A549 (cell line): ENCODE measurements at regions of chr16 and their contacts with region 1.

Region 1: GRCh38 chr16:67159593-67160406 is at the starts of genes FBXL8 and TRADD:
- DNase-seq: peak; percentile 67 to 76
- ATAC-seq: peak; percentile 83 to 89
- H3K4me3 ChIP-seq: peak within 1 kb of the TSS; percentile 94
- H3K27ac ChIP-seq: peak within 1 kb of the TSS; percentile 86 to 90
- H3K4me1 ChIP-seq: peaks cover 21% of the 10 kb centered on the region
- CTCF ChIP-seq: peak; percentile 70
- EP300 ChIP-seq: no peak
- POLR2A ChIP-seq: peak; percentile 64
- RAD21 ChIP-seq: no peak; a peak in 1 of 5 replicates
- polyA plus RNA-seq, gene FBXL8: 5.4 and 5.6 TPM in 2 replicates
- polyA plus RNA-seq, gene TRADD: 7.8 and 9.1 TPM in 2 replicates

Region 2: GRCh38 chr16:66961065-66961744 is 198.6 kb before region 1 on chr16 and contains the start of gene CES3:
- CTCF ChIA-PET with region 1: interaction called, 24 read pairs
- POLR2A ChIA-PET with region 1: interaction called, 4 read pairs
- DNase-seq: peak; percentile 80 to 85
- ATAC-seq: peak; percentile 99 to 100
- H3K4me3 ChIP-seq: peak within 1 kb of the TSS; percentile 33
- H3K27ac ChIP-seq: peak within 1 kb of the TSS; percentile 49 to 82; a peak in 4 of 6 replicates
- H3K4me1 ChIP-seq: no peaks in the 10 kb centered on the region
- CTCF ChIP-seq: peak; percentile 85
- EP300 ChIP-seq: no peak
- POLR2A ChIP-seq: no peak
- RAD21 ChIP-seq: peak in 1 of 2 experiments; percentile 18; a peak in 1 of 5 replicates
- polyA plus RNA-seq, gene CES3: 3.8 and 4.1 TPM in 2 replicates

Region 3: GRCh38 chr16:66988197-66988788 is 171.5 kb before region 1 on chr16 and contains the start of gene CES4A:
- CTCF ChIA-PET with region 1: interaction called, 11 read pairs
- POLR2A ChIA-PET with region 1: no interaction called
- DNase-seq: no peak
- ATAC-seq: peak; percentile 57 to 60; a peak in 5 of 6 replicates
- H3K4me3 ChIP-seq: no peak within 1 kb of the TSS
- H3K27ac ChIP-seq: peak within 1 kb of the TSS; percentile 38 to 44; a peak in 2 of 6 replicates
- H3K4me1 ChIP-seq: peaks cover 4% of the 10 kb centered on the region; the same call in 1 of the 3 replicates
- CTCF ChIP-seq: no peak
- EP300 ChIP-seq: no peak
- POLR2A ChIP-seq: no peak
- RAD21 ChIP-seq: no peak
- polyA plus RNA-seq, gene CES4A: 3.5 and 4.4 TPM in 2 replicates

Region 4: DNA sequence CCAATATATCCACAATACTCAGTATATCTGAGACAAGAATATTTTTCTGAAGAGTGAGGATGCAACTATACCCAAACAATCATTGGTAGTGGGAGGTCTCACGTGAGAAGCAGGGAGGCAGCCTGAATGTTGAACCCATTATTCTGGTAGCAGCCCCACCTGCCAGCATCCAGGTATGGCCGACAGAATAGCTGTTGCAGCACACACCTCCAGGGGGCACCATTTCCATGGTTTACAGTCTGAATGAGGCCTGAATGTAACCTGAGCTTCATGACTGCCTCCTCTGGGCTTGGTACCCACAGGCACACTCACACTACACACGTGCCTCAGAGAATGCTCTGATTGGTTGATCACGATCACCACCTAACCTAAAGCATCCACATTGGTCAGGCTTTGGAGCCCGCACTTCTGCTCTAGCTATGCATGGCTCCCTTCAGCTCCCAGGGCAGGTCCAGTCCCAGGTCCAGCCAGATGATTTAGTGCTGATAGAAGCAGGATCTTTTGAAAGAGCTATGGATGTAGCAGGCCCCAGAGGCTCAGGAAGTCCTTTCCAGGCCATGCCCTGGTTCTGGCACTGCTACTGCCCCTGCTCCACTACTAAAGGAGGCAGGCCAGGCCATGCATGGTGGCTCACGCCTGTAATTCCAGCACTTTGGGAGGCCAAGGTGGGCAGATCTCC is 141.9 kb before region 1 on chr16:
- CTCF ChIA-PET with region 1: interaction called, 94 read pairs
- POLR2A ChIA-PET with region 1: interaction called, 6 read pairs
- DNase-seq: peak; percentile 93 to 97
- ATAC-seq: peak; percentile 89 to 98
- H3K4me3 ChIP-seq: no peak overlapping the region
- H3K27ac ChIP-seq: peak overlapping the region in 1 of 2 experiments; percentile 49; a peak in 2 of 6 replicates
- H3K4me1 ChIP-seq: peaks cover 3% of the 10 kb centered on the region; the same call in 2 of the 3 replicates
- CTCF ChIP-seq: peak; percentile 84
- EP300 ChIP-seq: no peak
- POLR2A ChIP-seq: no peak
- RAD21 ChIP-seq: peak; percentile 84 to 92

Region 5: DNA sequence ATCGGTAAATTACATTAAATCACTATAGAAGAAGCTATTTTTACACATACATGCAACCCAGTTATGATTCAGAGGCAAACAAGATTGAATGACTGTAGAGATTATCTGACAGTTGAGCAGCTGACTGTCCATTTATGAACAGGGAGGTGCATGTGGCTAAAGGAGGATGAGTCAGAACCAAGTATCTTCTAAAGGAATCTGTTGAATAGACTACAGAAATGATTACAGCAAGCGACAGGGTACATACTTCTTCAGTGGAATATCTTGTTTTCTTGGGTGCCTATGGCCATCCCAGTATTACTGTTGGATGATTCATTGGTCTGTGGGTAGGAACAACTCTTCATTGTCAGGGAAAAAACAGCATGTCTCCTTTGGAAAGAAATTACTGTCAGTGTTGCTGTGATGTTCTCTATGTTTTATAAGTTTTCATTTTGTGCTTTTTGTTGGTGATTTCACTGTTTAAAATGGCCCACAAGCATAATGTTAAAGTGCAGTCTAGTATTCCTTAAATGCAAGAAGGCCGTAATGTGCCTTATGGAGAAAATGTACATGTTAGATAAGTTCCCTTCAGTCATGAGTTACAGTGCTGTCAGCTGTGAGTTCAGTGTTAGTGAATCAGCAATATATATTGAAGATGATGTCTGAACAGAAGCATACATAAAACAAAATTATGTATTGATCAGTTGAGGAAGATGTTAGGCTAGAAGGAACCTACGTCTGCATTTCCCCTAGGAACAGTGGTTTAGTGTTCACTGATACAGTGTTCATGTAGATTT is 103.9 kb before region 1 on chr16:
- CTCF ChIA-PET with region 1: interaction called, 10 read pairs
- POLR2A ChIA-PET with region 1: no interaction called
- DNase-seq: peak; percentile 36
- ATAC-seq: peak; percentile 84 to 85
- H3K4me3 ChIP-seq: no peak overlapping the region
- H3K27ac ChIP-seq: no peak overlapping the region
- H3K4me1 ChIP-seq: peaks cover 9% of the 10 kb centered on the region; the same call in 2 of the 3 replicates
- CTCF ChIP-seq: no peak
- EP300 ChIP-seq: no peak
- POLR2A ChIP-seq: no peak
- RAD21 ChIP-seq: no peak

Region 6: DNA sequence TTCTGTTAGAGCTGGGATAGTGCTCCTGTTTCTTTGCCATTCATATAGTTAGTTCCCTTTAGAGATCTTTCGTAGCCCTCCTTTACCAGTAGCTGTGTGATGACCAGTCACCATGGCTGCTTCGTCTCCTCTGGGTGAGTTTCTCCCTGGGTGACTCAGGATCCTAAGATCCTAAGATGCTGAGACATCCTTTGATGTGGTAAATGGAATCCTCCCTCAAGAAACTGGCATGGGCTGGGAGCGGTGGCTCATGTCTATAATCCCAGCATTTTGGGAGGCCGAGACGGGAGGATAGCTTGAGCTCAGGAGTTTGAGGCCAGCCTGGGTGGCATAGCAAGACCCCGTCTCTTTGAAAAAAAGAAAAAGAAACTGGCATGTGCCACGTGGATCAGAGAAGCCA is 44.2 kb before region 1 on chr16:
- CTCF ChIA-PET with region 1: interaction called, 17 read pairs
- POLR2A ChIA-PET with region 1: no interaction called
- DNase-seq: peak; percentile 58 to 68
- ATAC-seq: peak; percentile 82 to 84
- H3K4me3 ChIP-seq: no peak overlapping the region
- H3K27ac ChIP-seq: peak overlapping the region in 1 of 2 experiments; percentile 72; a peak in 3 of 6 replicates
- H3K4me1 ChIP-seq: peaks cover 44% of the 10 kb centered on the region
- CTCF ChIP-seq: no peak
- EP300 ChIP-seq: no peak
- POLR2A ChIP-seq: no peak
- RAD21 ChIP-seq: no peak

Region 7: GRCh38 chr16:67183627-67184328 is 24.0 kb after region 1 on chr16 and contains the start of gene MATCAP1:
- CTCF ChIA-PET with region 1: interaction called, 44 read pairs
- POLR2A ChIA-PET with region 1: no interaction called
- DNase-seq: peak; percentile 98 to 99
- ATAC-seq: peak; percentile 72 to 87
- H3K4me3 ChIP-seq: peak within 1 kb of the TSS; percentile 66
- H3K27ac ChIP-seq: peak within 1 kb of the TSS; percentile 93 to 97
- H3K4me1 ChIP-seq: peaks cover 34% of the 10 kb centered on the region
- CTCF ChIP-seq: no peak
- EP300 ChIP-seq: no peak
- POLR2A ChIP-seq: peak; percentile 45
- RAD21 ChIP-seq: no peak
- polyA plus RNA-seq, gene MATCAP1: 7.2 and 7.5 TPM in 2 replicates

Region 8: GRCh38 chr16:67226804-67227557 is 67.2 kb after region 1 on chr16 and contains the start of gene TMEM208:
- CTCF ChIA-PET with region 1: no interaction called
- POLR2A ChIA-PET with region 1: no interaction called
- DNase-seq: peak; percentile 92 to 98
- ATAC-seq: peak; percentile 87 to 97
- H3K4me3 ChIP-seq: peak within 1 kb of the TSS; percentile 83
- H3K27ac ChIP-seq: peak within 1 kb of the TSS; percentile 89 to 95
- H3K4me1 ChIP-seq: peaks cover 13% of the 10 kb centered on the region
- CTCF ChIP-seq: peak; percentile 36; the same call in 1 of the 3 replicates
- EP300 ChIP-seq: no peak
- POLR2A ChIP-seq: no peak; the same call in 1 of the 2 replicates
- RAD21 ChIP-seq: no peak
- polyA plus RNA-seq, gene TMEM208: 70.2 and 73.5 TPM in 2 replicates

Region 9: GRCh38 chr16:67279296-67280089 is 119.7 kb after region 1 on chr16 and contains the start of gene PLEKHG4:
- CTCF ChIA-PET with region 1: no interaction called
- POLR2A ChIA-PET with region 1: no interaction called
- DNase-seq: peak; percentile 86 to 93
- ATAC-seq: peak; percentile 86 to 91
- H3K4me3 ChIP-seq: peak within 1 kb of the TSS; percentile 80
- H3K27ac ChIP-seq: peak within 1 kb of the TSS; percentile 96 to 98
- H3K4me1 ChIP-seq: peaks cover 35% of the 10 kb centered on the region
- CTCF ChIP-seq: peak; percentile 78
- EP300 ChIP-seq: no peak
- POLR2A ChIP-seq: peak; percentile 65
- RAD21 ChIP-seq: peak; percentile 33 to 60; a peak in 4 of 5 replicates
- polyA plus RNA-seq, gene PLEKHG4: 10.0 and 17.7 TPM in 2 replicates